ENCODE measurements at regions of chr1 and their contacts with region 1.

Region 1: DNA sequence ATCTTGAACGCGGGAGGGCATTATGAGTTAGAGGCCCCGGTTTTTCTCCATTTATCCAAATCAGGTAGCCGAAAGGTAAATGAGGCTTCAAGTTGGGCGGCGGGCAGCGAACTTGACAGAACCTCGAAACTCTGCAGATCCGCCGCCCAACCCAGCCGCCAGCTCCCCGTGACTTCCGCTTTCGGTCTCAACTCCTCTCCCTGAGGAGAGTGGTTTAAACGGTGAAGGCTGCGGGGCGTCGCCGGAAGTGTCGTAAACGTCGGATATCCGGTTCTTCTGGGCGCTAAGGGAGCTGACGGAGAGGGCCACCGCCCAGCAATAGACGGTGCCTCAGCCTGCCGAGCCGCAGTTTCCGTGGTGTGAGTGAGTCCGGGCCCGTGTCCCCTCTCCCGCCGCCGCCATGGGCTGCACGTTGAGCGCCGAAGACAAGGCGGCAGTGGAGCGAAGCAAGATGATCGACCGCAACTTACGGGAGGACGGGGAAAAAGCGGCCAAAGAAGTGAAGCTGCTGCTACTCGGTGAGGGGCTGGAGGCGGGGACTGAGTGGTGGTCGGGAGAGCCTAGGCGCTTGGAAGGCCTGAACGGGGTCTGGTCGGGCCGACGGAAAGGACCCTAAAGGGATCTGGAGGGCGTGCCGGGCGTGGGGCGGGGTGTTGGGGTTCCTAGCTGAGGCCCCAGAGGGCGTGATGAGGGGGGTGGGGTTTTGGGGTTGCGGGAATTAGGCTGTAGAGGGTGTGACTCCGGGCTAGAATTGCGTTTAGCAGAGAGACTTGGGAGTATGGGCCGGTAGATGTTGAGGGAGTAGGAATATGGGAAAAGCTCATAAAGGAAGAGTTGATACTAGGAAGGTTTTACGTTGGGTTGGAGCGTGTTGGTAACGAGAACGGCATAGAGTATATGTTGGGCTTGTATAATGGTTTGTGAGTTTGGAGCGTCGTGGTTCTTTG is at the start of gene GNAI3:
- DNase-seq: peak; percentile 97
- ATAC-seq: peak; percentile 87
- H3K4me3 ChIP-seq: peak within 1 kb of the TSS; percentile 84 to 95 (median 92)
- H3K4me3 Mint-ChIP-seq: peak within 1 kb of the TSS; percentile 99
- H3K27ac ChIP-seq: peak within 1 kb of the TSS; percentile 93 to 96
- H3K27ac Mint-ChIP-seq: peak within 1 kb of the TSS; percentile 99
- H3K4me1 ChIP-seq: peaks cover 25 to 33% of the 10 kb centered on the region in 2 donors
- H3K4me1 Mint-ChIP-seq: peaks cover 55% of the 10 kb centered on the region
- H3K27me3 ChIP-seq: no peaks in the 10 kb centered on the region
- H3K27me3 Mint-ChIP-seq: no peaks in the 10 kb centered on the region
- CTCF ChIP-seq: no peak
- total RNA-seq, gene GNAI3: 8.5 and 8.8 TPM in 2 replicates

Region 2: GRCh38 chr1:109432336-109432735 is 116.3 kb before region 1 on chr1:
- CTCF ChIA-PET with region 1: no interaction called
- POLR2A ChIA-PET with region 1: no interaction called
- intact Hi-C with region 1: no loop called
- DNase-seq: no peak
- ATAC-seq: no peak
- H3K4me3 ChIP-seq: no peak overlapping the region
- H3K4me3 Mint-ChIP-seq: no peak overlapping the region
- H3K27ac ChIP-seq: no peak overlapping the region
- H3K27ac Mint-ChIP-seq: no peak overlapping the region
- H3K4me1 ChIP-seq: peaks cover under 1 to 2% of the 10 kb centered on the region in 2 donors
- H3K4me1 Mint-ChIP-seq: peaks cover 1% of the 10 kb centered on the region
- H3K27me3 ChIP-seq: peaks cover 0 to 9% (median 0%) of the 10 kb centered on the region in 4 experiments
- H3K27me3 Mint-ChIP-seq: peaks cover 18% of the 10 kb centered on the region
- CTCF ChIP-seq: no peak

Region 3: GRCh38 chr1:109483672-109484518 is 64.7 kb before region 1 on chr1 and contains the start of gene ATXN7L2:
- CTCF ChIA-PET with region 1: interaction called, 4 read pairs
- POLR2A ChIA-PET with region 1: interaction called, 8 read pairs
- intact Hi-C with region 1: loop called (anchors 1 kb)
- DNase-seq: peak; percentile 96
- ATAC-seq: peak; percentile 77
- H3K4me3 ChIP-seq: peak within 1 kb of the TSS; percentile 51 to 82 (median 74)
- H3K4me3 Mint-ChIP-seq: peak within 1 kb of the TSS; percentile 96
- H3K27ac ChIP-seq: peak within 1 kb of the TSS; percentile 92 to 95
- H3K27ac Mint-ChIP-seq: peak within 1 kb of the TSS; percentile 88
- H3K4me1 ChIP-seq: peaks cover 12 to 23% of the 10 kb centered on the region in 2 donors
- H3K4me1 Mint-ChIP-seq: peaks cover 28% of the 10 kb centered on the region
- H3K27me3 ChIP-seq: peaks cover 0 to 15% (median 5%) of the 10 kb centered on the region in 4 experiments
- H3K27me3 Mint-ChIP-seq: peaks cover 20% of the 10 kb centered on the region
- CTCF ChIP-seq: no peak
- total RNA-seq, gene ATXN7L2: 10.1 and 10.9 TPM in 2 replicates

Region 4: DNA sequence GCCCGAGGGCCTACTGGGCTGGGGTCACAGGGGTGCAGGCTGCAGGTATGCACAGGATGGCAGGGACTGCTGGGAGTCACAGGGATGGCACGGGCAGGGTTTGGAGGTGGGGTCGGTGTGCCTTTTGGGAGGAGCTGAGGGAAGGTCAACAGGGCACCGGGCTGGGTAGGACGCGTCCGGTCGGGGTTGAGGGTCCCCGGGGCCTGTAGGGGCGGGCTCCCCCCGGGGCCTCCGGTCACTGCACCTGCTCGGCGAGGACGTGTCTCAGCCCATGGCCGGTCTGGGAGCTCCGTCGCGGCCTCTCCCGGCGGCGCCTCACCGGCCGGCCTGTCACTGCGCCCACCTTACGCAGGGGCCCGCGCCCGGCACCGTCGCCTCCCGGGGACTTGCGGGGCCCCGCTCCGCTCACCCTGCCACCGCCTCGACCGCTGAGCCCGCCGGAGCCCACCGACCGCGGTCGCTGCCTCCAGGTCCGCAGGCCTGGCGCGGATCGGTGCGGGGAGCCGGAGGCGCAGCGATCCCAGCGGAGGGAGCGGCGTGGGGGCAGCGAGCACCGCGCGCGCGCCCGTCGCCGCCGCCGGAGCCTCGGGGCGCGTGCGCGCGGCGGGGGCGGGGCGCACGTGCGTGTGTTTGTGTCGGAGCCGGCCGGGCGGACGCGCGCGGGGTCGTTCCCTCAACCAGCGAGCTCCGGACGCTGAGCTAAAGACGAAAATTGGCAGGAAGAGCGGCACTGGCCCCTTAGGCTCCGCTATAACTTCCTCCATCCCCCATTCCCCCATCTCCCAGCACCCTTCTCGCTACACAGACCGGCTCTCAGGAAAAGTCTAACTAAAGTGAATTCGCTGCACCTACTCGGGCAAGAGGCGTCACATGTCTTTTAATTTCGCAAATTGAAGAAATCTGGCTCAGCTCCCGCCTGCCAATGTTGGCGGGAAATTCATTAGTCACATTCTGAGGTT is 39.1 kb before region 1 on chr1 and contains the start of gene AMIGO1:
- CTCF ChIA-PET with region 1: no interaction called
- POLR2A ChIA-PET with region 1: no interaction called
- intact Hi-C with region 1: no loop called
- DNase-seq: peak; percentile 81
- ATAC-seq: peak; percentile 84
- H3K4me3 ChIP-seq: peak within 1 kb of the TSS; percentile 49 to 64 (median 62)
- H3K4me3 Mint-ChIP-seq: peak within 1 kb of the TSS; percentile 92
- H3K27ac ChIP-seq: no peak within 1 kb of the TSS
- H3K27ac Mint-ChIP-seq: peak within 1 kb of the TSS; percentile 37
- H3K4me1 ChIP-seq: peaks cover 11 to 15% of the 10 kb centered on the region in 2 donors
- H3K4me1 Mint-ChIP-seq: peaks cover 18% of the 10 kb centered on the region
- H3K27me3 ChIP-seq: peaks cover 0 to 9% (median 5%) of the 10 kb centered on the region in 4 experiments
- H3K27me3 Mint-ChIP-seq: peaks cover 37% of the 10 kb centered on the region
- CTCF ChIP-seq: no peak
- total RNA-seq, gene AMIGO1: 2.4 and 2.6 TPM in 2 replicates

Region 5: GRCh38 chr1:109532365-109533136 is 16.0 kb before region 1 on chr1:
- CTCF ChIA-PET with region 1: interaction called, 41 read pairs
- POLR2A ChIA-PET with region 1: no interaction called
- intact Hi-C with region 1: loop called (anchors 1 kb)
- DNase-seq: peak; percentile 88
- ATAC-seq: peak; percentile 90
- H3K4me3 ChIP-seq: peak overlapping the region in 4 of 5 experiments; percentile 37 to 67 (median 52)
- H3K4me3 Mint-ChIP-seq: peak overlapping the region; percentile 90
- H3K27ac ChIP-seq: peak overlapping the region in 1 of 2 donors; percentile 21
- H3K27ac Mint-ChIP-seq: peak overlapping the region; percentile 87
- H3K4me1 ChIP-seq: peaks cover 4 to 11% of the 10 kb centered on the region in 2 donors
- H3K4me1 Mint-ChIP-seq: peaks cover 11% of the 10 kb centered on the region
- H3K27me3 ChIP-seq: no peaks in the 10 kb centered on the region
- H3K27me3 Mint-ChIP-seq: no peaks in the 10 kb centered on the region
- CTCF ChIP-seq: peak; percentile 93

Region 6: GRCh38 chr1:109620841-109621286 is 72.3 kb after region 1 on chr1:
- CTCF ChIA-PET with region 1: interaction called, 16 read pairs
- POLR2A ChIA-PET with region 1: interaction called, 10 read pairs
- intact Hi-C with region 1: loop called (anchors 1 kb)
- DNase-seq: peak; percentile 86
- ATAC-seq: peak; percentile 59
- H3K4me3 ChIP-seq: peak overlapping the region; percentile 65 to 94 (median 84)
- H3K4me3 Mint-ChIP-seq: peak overlapping the region; percentile 99
- H3K27ac ChIP-seq: peak overlapping the region; percentile 64 to 90
- H3K27ac Mint-ChIP-seq: peak overlapping the region; percentile 96
- H3K4me1 ChIP-seq: peaks cover 50 to 65% of the 10 kb centered on the region in 2 donors
- H3K4me1 Mint-ChIP-seq: peaks cover 72% of the 10 kb centered on the region
- H3K27me3 ChIP-seq: no peaks in the 10 kb centered on the region
- H3K27me3 Mint-ChIP-seq: no peaks in the 10 kb centered on the region
- CTCF ChIP-seq: no peak

Region 7: DNA sequence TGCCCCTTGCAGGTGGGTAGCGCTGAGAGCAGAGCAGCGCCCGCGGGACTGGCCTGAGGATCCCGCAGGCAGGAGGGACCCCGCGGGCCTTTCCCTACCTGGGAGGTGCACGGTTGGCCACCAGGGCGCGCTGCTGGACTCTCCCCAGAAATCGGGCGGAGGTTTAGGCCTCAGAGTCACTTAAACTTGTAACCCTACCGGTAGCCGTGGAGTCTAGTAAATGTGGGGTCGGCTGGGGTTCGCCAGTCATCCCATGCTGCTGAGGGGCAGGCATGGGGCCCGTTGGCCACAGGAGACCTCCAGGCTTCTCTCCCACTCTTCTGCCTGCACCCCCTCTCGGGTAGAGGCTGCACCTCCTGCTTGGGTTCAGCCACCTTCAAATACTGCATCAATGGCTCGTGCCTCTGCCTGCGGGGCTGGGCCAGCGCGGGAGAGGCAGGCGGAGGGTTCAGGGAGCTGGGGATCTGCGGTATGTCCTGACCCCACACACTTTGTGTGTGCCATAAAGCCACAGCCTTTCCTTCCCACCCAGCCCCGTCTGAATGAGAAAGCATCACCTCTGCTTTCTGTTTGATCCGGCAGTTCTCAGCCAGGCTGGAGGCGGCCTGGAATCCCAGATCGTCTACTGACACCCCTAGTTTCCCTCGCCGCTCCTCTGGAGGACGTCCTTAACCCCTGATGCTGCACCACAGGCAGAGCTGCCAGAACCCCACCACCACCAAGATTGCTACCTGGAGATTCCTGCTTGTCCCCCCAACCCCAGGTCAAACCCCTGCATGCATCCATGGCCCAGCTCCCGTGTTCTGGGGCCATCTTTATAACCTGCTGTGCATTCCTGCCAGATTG is 95.0 kb after region 1 on chr1:
- CTCF ChIA-PET with region 1: interaction called, 276 read pairs
- POLR2A ChIA-PET with region 1: interaction called, 8 read pairs
- intact Hi-C with region 1: loop called (anchors 1 kb)
- DNase-seq: peak; percentile 86
- ATAC-seq: peak; percentile 88
- H3K4me3 ChIP-seq: peak overlapping the region in 1 of 5 experiments; percentile 6
- H3K4me3 Mint-ChIP-seq: peak overlapping the region; percentile 7
- H3K27ac ChIP-seq: no peak overlapping the region
- H3K27ac Mint-ChIP-seq: no peak overlapping the region
- H3K4me1 ChIP-seq: peaks cover 4 to 14% of the 10 kb centered on the region in 2 donors
- H3K4me1 Mint-ChIP-seq: peaks cover 13% of the 10 kb centered on the region
- H3K27me3 ChIP-seq: peaks cover 0 to 2% (median 0%) of the 10 kb centered on the region in 4 experiments
- H3K27me3 Mint-ChIP-seq: peaks cover 4% of the 10 kb centered on the region
- CTCF ChIP-seq: peak; percentile 92

Region 8: DNA sequence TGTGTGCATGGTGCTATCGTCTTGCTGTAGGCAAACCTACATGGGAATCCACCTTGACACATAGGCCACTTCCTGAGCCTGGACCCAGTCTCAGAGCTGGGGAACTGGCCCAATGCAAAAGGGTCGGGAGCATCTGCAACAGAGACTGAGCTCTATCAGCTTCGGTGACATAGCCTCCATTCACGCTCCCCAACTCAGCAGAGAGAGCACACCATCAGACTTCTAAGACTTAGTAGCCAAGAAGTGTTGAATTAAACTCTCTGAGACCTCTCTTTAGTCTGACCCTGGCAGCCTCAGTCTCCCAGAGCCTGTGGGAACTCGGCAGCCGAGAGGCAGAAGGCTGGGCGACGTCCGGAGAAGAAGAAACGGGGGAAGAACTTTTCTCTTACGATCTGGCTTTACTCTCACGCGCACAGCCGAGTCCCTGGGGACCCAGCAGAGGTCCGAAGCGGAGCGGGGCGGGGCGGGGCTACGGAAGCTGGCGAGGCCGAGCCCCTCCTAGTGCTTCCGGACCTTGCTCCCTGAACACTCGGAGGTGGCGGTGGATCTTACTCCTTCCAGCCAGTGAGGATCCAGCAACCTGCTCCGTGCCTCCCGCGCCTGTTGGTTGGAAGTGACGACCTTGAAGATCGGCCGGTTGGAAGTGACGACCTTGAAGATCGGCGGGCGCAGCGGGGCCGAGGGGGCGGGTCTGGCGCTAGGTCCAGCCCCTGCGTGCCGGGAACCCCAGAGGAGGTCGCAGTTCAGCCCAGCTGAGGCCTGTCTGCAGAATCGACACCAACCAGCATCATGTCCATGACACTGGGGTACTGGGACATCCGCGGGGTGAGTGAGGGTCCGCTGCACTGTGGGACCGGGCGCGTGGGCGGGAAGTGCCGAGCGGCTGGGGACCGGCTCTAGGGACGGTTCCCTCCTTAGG is 107.3 kb after region 1 on chr1 and contains the start of gene GSTM4:
- CTCF ChIA-PET with region 1: interaction called, 9 read pairs
- POLR2A ChIA-PET with region 1: no interaction called
- intact Hi-C with region 1: loop called (anchors 2 kb)
- DNase-seq: peak; percentile 90
- ATAC-seq: peak; percentile 96
- H3K4me3 ChIP-seq: peak within 1 kb of the TSS; percentile 45 to 97 (median 90)
- H3K4me3 Mint-ChIP-seq: peak within 1 kb of the TSS; percentile 96
- H3K27ac ChIP-seq: peak within 1 kb of the TSS; percentile 37 to 76
- H3K27ac Mint-ChIP-seq: peak within 1 kb of the TSS; percentile 93
- H3K4me1 ChIP-seq: peaks cover 11 to 17% of the 10 kb centered on the region in 2 donors
- H3K4me1 Mint-ChIP-seq: peaks cover 23% of the 10 kb centered on the region
- H3K27me3 ChIP-seq: peaks cover 0 to 6% (median 0%) of the 10 kb centered on the region in 4 experiments
- H3K27me3 Mint-ChIP-seq: peaks cover 20% of the 10 kb centered on the region
- CTCF ChIP-seq: no peak
- total RNA-seq, gene GSTM4: 28.6 and 39.4 TPM in 2 replicates

Region 9: GRCh38 chr1:109838838-109839240 is 290.2 kb after region 1 on chr1:
- CTCF ChIA-PET with region 1: no interaction called
- POLR2A ChIA-PET with region 1: no interaction called
- intact Hi-C with region 1: no loop called
- DNase-seq: no peak
- ATAC-seq: no peak
- H3K4me3 ChIP-seq: no peak overlapping the region
- H3K4me3 Mint-ChIP-seq: no peak overlapping the region
- H3K27ac ChIP-seq: no peak overlapping the region
- H3K27ac Mint-ChIP-seq: no peak overlapping the region
- H3K4me1 ChIP-seq: no peaks in the 10 kb centered on the region
- H3K4me1 Mint-ChIP-seq: no peaks in the 10 kb centered on the region
- H3K27me3 ChIP-seq: peaks cover 0 to 4% (median 2%) of the 10 kb centered on the region in 4 experiments
- H3K27me3 Mint-ChIP-seq: peaks cover 14% of the 10 kb centered on the region
- CTCF ChIP-seq: no peak

Region 10: DNA sequence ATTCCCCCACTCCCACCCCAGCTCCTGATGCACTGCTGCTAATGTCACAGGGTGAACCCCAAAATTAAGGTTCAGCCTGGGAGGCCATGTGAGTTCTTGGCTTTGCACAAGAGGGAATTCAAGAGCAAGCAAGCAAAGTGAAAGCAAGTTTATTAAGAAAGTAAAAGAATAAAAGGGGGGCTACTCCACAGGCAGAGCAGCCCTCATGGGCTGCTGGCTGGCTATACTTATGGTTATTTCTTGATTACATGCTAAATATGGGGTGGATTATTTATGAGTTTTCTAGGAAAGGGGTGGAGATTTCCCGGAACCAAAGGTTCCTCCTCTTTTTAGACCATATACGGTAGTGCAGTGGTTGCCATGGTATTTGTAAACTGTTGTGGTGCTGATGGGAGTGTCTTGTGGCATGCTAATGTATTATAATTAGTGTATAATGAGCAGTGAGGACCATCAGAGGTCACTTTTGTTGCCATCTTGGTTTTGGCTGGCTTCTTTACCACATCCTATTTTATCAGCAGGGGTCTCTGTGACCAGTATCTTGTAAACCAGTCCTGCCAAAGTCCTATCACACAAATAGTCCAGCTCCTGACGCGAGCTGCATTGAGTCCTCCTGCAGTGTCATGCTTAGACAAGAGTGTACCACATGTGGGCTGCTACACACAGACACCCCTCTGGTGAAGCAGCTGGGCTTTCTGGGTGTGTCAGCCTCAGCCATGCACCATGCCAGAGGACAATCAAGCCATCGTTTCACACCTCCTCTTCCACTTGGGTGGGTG is 315.6 kb after region 1 on chr1:
- CTCF ChIA-PET with region 1: no interaction called
- POLR2A ChIA-PET with region 1: no interaction called
- intact Hi-C with region 1: no loop called
- DNase-seq: no peak
- ATAC-seq: no peak
- H3K4me3 ChIP-seq: no peak overlapping the region
- H3K4me3 Mint-ChIP-seq: no peak overlapping the region
- H3K27ac ChIP-seq: no peak overlapping the region
- H3K27ac Mint-ChIP-seq: no peak overlapping the region
- H3K4me1 ChIP-seq: no peaks in the 10 kb centered on the region
- H3K4me1 Mint-ChIP-seq: peaks cover 3% of the 10 kb centered on the region
- H3K27me3 ChIP-seq: peaks cover 0 to 2% (median 0%) of the 10 kb centered on the region in 4 experiments
- H3K27me3 Mint-ChIP-seq: peaks cover 18% of the 10 kb centered on the region
- CTCF ChIP-seq: no peak

Region 11: GRCh38 chr1:110011527-110012041 is 463.0 kb after region 1 on chr1:
- CTCF ChIA-PET with region 1: interaction called, 15 read pairs
- POLR2A ChIA-PET with region 1: no interaction called
- intact Hi-C with region 1: loop called (anchors 1 kb)
- DNase-seq: peak; percentile 92
- ATAC-seq: peak; percentile 93
- H3K4me3 ChIP-seq: peak overlapping the region in 3 of 5 experiments; percentile 29 to 37 (median 34)
- H3K4me3 Mint-ChIP-seq: peak overlapping the region; percentile 82
- H3K27ac ChIP-seq: peak overlapping the region; percentile 93 to 94
- H3K27ac Mint-ChIP-seq: peak overlapping the region; percentile 98
- H3K4me1 ChIP-seq: peaks cover 25 to 27% of the 10 kb centered on the region in 2 donors
- H3K4me1 Mint-ChIP-seq: peaks cover 33% of the 10 kb centered on the region
- H3K27me3 ChIP-seq: no peaks in the 10 kb centered on the region
- H3K27me3 Mint-ChIP-seq: no peaks in the 10 kb centered on the region
- CTCF ChIP-seq: peak; percentile 79

Measured in B cell (primary cell).